ENCODE measurements at regions of chr5 and their contacts with region 1.

Region 1: GRCh38 chr5:6745706-6746222 is 32.5 kb downstream of the TENT4A start:
- DNase-seq: no peak
- H3K4me3 Mint-ChIP-seq: no peak overlapping the region
- H3K27ac Mint-ChIP-seq: peak overlapping the region; percentile 42
- H3K4me1 Mint-ChIP-seq: peaks cover 14% of the 10 kb centered on the region
- H3K27me3 Mint-ChIP-seq: no peaks in the 10 kb centered on the region

Region 2: GRCh38 chr5:6728011-6728794 is 17.6 kb before region 1 on chr5:
- intact Hi-C with region 1: loop called (anchors 2 kb)
- DNase-seq: no peak
- H3K4me3 Mint-ChIP-seq: no peak overlapping the region
- H3K27ac Mint-ChIP-seq: peak overlapping the region; percentile 80
- H3K4me1 Mint-ChIP-seq: peaks cover 64% of the 10 kb centered on the region
- H3K27me3 Mint-ChIP-seq: no peaks in the 10 kb centered on the region

Measured in activated T-helper 2 cell treated with anti-CD3 and anti-CD28 coated beads, Interferon-gamma antibody, Interleukin-2, Interleukin-4, amounts not matched to agents 10 μg/mL and 5 μg/mL and 100 μg/mL, durations not matched to agents 14 hours and 24 hours and 36 hours (primary cell).